Vagina (tissue), 2 donors: ENCODE measurements at regions of chr7 and their contacts with region 1.

Region 1: GRCh38 chr7:139340037-139340807 is 915 bp upstream of the FMC1 start:
- DNase-seq: peak; percentile 98 to 100
- H3K4me3 ChIP-seq: peak overlapping the region; percentile 62 to 85
- H3K27ac ChIP-seq: peak overlapping the region; percentile 100
- H3K4me1 ChIP-seq: peaks cover 18% of the 10 kb centered on the region
- H3K27me3 ChIP-seq: no peaks in the 10 kb centered on the region
- CTCF ChIP-seq: peak; percentile 22 to 49 (median 44)
- POLR2A ChIP-seq: peak in 1 of 2 donors; percentile 46

Region 2: DNA sequence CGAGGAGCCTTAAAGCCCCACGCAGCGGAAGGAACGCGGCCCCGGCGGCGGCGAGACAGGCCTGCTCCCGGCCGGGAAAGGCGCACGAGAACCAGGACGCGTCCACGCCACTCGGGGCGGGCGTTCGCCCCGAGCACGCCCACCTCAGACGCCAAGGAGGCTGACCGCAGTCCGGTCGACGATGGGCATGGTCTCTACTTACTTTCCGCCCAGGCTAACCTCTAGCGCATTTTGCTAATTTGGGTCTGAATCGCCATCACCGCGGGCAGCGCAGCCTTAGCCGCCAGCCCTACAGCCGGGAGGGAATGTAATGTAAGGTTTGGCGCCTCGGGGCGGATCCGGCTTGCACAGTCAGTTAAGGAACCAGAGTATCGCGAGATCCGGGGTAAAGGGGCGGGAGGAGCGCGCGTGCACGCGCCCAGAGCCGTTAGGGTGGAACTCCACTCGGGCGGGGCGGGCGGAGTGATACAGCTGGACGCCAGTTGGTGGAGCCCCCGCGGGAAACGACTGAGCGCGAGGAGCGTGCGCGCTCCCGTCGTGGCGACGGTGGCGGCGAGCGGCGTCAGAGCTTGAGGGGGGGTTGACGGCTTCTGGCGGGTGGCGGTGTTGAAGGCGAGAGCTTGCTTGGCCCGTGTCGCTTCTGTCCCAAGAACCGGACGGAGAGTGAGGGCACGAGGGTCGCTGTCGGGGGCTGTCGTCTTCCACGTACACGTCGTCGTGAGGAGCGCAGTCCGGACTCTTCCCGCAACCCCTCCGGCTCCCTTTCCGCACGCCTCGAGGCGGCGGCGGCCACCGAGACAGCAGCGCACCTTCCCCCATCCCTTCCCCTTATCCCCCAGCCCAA is 19.4 kb after region 1 on chr7 and contains the start of gene LUC7L2:
- intact Hi-C with region 1: loop called (anchors 2 kb)
- DNase-seq: peak; percentile 97 to 99
- H3K4me3 ChIP-seq: peak within 1 kb of the TSS; percentile 93 to 100
- H3K27ac ChIP-seq: peak within 1 kb of the TSS; percentile 100
- H3K4me1 ChIP-seq: peaks cover 37% of the 10 kb centered on the region
- H3K27me3 ChIP-seq: no peaks in the 10 kb centered on the region
- CTCF ChIP-seq: no peak
- POLR2A ChIP-seq: peak in 1 of 2 donors; percentile 88
- total RNA-seq, gene LUC7L2: 51.8 TPM